Lower leg skin (tissue), 4 donors: ENCODE measurements at regions of chr11 and their contacts with region 1.

Region 1: DNA sequence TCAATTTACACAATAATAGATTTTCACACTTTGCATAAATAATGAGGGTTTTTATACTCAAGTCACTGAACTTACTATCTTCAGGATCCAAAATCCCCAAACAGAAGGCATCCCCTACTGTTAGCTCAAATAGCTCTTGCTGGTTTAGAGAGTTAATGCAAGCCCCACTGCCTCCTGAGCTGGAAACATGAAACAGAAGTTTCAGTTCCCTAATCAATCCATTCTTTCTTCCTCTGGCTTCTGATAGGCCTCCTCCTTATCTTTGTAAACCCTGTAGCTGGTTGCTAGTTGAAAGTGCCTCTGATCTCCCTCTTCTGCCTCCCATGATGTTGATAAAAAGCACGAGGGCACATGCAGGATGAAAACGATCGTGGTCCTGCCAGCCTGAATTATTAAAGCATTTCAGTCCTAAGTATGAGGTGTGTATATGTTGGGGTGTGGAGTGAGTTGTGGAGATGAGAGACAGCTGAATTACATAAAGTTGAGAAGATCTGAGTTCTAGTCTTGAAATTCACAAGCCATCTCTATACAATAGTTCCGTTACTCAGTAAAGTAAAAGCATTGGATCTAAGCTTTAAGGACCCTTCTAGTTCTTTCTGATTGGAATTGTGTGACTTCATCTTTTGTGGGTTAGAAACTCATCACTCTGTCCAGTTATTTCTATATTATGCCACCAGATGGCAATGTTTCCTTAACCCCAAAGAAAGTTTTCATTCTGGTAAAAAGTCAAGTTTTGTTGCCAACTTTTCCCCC is 35.0 kb upstream of the EHF start:
- DNase-seq: no peak
- H3K4me3 ChIP-seq: no peak overlapping the region
- CTCF ChIP-seq: no peak
- POLR2A ChIP-seq: no peak

Region 2: GRCh38 chr11:34633990-34634693 is 48.2 kb after region 1 on chr11:
- intact Hi-C with region 1: no loop called
- DNase-seq: no peak
- H3K4me3 ChIP-seq: no peak overlapping the region
- CTCF ChIP-seq: no peak
- POLR2A ChIP-seq: no peak

Region 3: DNA sequence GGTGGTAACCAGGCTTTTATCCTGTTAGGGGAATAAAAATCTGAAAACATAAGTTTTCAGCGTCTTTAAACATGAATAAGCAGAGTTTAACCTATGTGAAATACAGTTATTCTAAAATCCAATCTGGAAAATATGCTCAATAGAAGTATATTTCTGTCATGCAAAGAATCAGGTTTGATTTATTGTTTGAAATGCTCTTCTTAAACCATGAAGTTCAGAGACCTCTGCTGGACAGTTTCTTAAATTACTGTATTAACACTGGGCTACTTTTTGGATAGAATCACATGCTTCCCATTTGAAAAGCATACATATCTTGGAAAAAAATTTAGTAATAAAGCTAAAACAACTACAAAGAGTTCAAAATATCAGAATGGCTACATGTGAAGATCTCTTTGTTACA is 304.9 kb after region 1 on chr11:
- intact Hi-C with region 1: loop called (anchors 5 kb)
- DNase-seq: no peak
- H3K4me3 ChIP-seq: no peak overlapping the region
- CTCF ChIP-seq: no peak
- POLR2A ChIP-seq: no peak